GM12878 (cell line): ENCODE measurements at regions of chr12 and their contacts with region 1.

Region 1: GRCh38 chr12:57614178-57614947 is 3.1 kb downstream of the ARHGEF25 start:
- DNase-seq: peak; percentile 33
- ATAC-seq: peak; percentile 76
- H3K4me3 ChIP-seq: no peak overlapping the region
- H3K27ac ChIP-seq: no peak overlapping the region; the same call in 1 of the 2 replicates
- H3K4me1 ChIP-seq: peaks cover 10% of the 10 kb centered on the region
- H3K27me3 ChIP-seq: peaks cover under 1 to 4% of the 10 kb centered on the region in 2 experiments; a peak in 2 of 4 replicates
- CTCF ChIP-seq: no peak
- EP300 ChIP-seq: no peak
- POLR2A ChIP-seq: no peak
- RAD21 ChIP-seq: no peak

Region 2: DNA sequence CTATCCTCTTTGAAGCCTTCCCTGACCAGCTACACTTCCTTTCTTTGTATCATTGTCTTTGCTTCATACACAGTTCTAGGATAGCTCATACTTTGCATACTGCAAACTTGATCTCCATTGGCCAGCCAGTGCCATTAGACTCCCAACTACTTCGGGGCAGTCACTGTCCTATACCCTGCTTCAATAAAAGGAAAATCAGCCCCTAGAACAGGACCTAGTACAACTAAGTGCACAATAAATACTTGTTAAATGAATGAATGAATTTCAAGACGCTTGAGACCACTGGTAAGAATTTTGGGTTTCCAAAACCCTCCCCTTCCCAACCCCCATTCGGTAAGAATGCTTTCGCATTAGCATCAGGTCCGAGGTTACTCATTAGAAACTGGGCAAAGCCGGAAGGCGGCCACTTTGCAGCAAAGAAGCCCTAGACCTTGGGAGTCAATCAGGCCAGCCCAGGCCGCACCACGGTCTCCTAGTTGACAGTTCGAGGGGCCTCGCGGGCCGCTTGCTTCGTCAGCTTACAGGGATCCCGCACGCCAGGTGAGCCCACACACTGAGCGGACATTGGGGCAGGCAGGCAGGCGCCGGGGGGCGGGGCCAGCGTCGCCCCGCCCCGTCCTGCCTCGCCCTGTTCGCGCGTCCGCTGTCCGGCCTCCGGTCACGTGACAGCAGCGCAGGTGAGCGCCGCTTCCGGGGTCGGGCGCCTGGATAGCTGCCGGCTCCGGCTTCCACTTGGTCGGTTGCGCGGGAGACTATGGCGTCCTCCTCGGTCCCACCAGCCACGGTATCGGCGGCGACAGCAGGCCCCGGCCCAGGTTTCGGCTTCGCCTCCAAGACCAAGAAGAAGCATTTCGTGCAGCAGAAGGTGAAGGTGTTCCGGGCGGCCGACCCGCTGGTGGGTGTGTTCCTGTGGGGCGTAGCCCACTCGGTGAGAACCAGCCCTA is 23.6 kb before region 1 on chr12 and contains the start of gene PIP4K2C:
- CTCF ChIA-PET with region 1: interaction called, 119 read pairs
- POLR2A ChIA-PET with region 1: interaction called, 9 read pairs
- RAD21 ChIA-PET with region 1: interaction called, 28 read pairs
- SMC1A ChIA-PET with region 1: interaction called, 15 read pairs
- in situ Hi-C with region 1: no loop called
- intact Hi-C with region 1: no loop called
- DNase-seq: peak; percentile 44
- ATAC-seq: peak; percentile 99
- H3K4me3 ChIP-seq: peak within 1 kb of the TSS; percentile 98
- H3K27ac ChIP-seq: peak within 1 kb of the TSS; percentile 51
- H3K4me1 ChIP-seq: peaks cover 4% of the 10 kb centered on the region; the same call in 1 of the 2 replicates
- H3K27me3 ChIP-seq: no peaks in the 10 kb centered on the region
- CTCF ChIP-seq: no peak
- EP300 ChIP-seq: no peak
- POLR2A ChIP-seq: peak; percentile 93
- RAD21 ChIP-seq: no peak
- polyA plus RNA-seq, gene PIP4K2C: 4.8 to 6.0 TPM

Region 3: GRCh38 chr12:57993025-57993424 is 378.7 kb after region 1 on chr12:
- CTCF ChIA-PET with region 1: no interaction called
- POLR2A ChIA-PET with region 1: no interaction called
- RAD21 ChIA-PET with region 1: no interaction called
- SMC1A ChIA-PET with region 1: no interaction called
- in situ Hi-C with region 1: no loop called
- intact Hi-C with region 1: no loop called
- DNase-seq: no peak
- ATAC-seq: no peak
- H3K4me3 ChIP-seq: no peak overlapping the region
- H3K27ac ChIP-seq: no peak overlapping the region
- H3K4me1 ChIP-seq: no peaks in the 10 kb centered on the region
- H3K27me3 ChIP-seq: no peaks in the 10 kb centered on the region
- CTCF ChIP-seq: no peak
- EP300 ChIP-seq: no peak
- POLR2A ChIP-seq: no peak
- RAD21 ChIP-seq: no peak